Motor neuron (in vitro differentiated cells): ENCODE measurements at regions of chr11 and their contacts with region 1.

Region 1: DNA sequence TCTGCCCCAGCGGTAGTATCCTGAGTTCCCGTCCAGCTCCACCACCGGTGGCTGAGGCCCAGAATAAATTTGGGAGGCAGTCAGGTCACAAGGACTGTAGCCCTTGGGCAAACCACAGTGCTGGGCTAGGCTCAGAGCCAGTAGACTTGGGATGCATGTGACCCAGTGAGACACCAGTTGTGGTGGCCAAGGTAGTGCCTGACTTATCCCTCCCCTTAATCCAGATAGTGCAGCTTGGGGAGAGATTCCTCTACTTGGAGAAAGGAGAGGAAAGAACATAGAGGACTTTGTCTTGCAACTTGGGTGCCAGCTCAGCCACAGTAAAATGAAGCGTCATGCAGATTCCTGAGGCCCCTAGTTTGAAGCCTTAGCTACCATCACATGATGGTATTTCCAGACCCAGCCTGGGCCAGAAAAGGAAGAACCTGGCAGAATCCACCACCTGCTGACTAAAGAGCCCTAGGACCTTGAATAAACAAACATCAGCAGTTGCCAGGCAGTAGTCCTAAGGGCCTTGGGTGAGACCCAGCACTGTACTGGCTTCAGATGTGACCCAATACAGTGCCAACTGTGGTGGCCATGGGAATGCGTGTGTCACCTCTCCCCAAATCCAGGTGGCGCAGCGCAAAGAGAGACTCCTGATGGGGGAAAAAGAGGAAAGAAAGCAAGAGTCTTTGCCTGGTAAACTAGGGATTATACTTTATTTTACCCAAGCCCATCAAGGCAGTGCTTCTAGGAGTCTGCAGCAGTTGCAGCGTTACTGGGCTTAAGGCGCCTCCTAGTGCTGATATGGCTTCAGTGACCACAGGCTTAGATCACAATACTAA is 17.0 kb upstream of the DDX10 start:
- ATAC-seq: peak; percentile 85 to 97 (median 90)
- H3K4me3 ChIP-seq: no peak overlapping the region
- H3K27ac ChIP-seq: no peak overlapping the region
- H3K4me1 ChIP-seq: no peaks in the 10 kb centered on the region

Region 2: DNA sequence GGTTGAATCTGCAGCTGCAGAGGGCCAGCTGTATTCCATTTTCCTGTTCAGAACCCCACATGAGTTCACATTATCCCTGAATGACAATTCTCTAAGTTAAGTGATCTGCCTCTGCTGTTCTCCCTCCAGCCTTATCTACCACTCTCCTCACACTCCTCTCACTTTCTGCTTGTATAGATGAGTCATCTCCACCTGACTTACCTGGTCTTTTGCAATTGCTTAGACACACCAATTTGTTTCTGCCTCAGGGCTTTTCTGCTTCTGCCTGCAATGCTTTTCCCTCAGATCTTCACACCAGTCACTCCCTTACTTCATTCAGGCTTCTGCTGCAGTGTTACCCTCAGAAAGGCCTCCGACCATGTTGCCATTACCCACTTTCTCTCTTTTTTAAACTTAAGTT is 306.9 kb before region 1 on chr11:
- in situ Hi-C with region 1: loop called in 2 of 9 experiments (anchors 25 kb)
- ATAC-seq: peak in 1 of 8 experiments; percentile 64
- H3K4me3 ChIP-seq: no peak overlapping the region
- H3K27ac ChIP-seq: no peak overlapping the region
- H3K4me1 ChIP-seq: peaks cover 0 to 8% of the 10 kb centered on the region in 2 donors

Region 3: GRCh38 chr11:108593214-108593922 is 54.5 kb before region 1 on chr11 and contains the start of gene EXPH5:
- in situ Hi-C with region 1: loop called in 1 of 9 experiments (anchors 10 kb)
- ATAC-seq: peak; percentile 67 to 96 (median 94)
- H3K4me3 ChIP-seq: peak within 1 kb of the TSS; percentile 39 to 56 (median 51)
- H3K27ac ChIP-seq: no peak within 1 kb of the TSS
- H3K4me1 ChIP-seq: peaks cover 2 to 5% of the 10 kb centered on the region in 2 donors
- total RNA-seq, gene EXPH5: 0.16 to 17.3 (median 0.77) TPM